Activated CD8-positive, alpha-beta T cell treated with anti-CD3 and anti-CD28 coated beads for 36 hours (primary cell): ENCODE measurements at regions of chr1 and their contacts with region 1.

Region 1: GRCh38 chr1:160085686-160086455 is 4.5 kb downstream of the KCNJ9 start:
- DNase-seq: peak; percentile 92
- ATAC-seq: peak; percentile 76
- H3K4me3 Mint-ChIP-seq: no peak overlapping the region
- H3K27ac Mint-ChIP-seq: no peak overlapping the region
- H3K4me1 Mint-ChIP-seq: peaks cover 5% of the 10 kb centered on the region
- H3K27me3 Mint-ChIP-seq: peaks cover 21% of the 10 kb centered on the region
- CTCF ChIP-seq: peak; percentile 91

Region 2: GRCh38 chr1:160031365-160032164 is 54.3 kb before region 1 on chr1 and contains the start of gene PIGM:
- CTCF ChIA-PET with region 1: interaction called, 693 read pairs
- POLR2A ChIA-PET with region 1: interaction called, 3 read pairs
- intact Hi-C with region 1: loop called (anchors 10 kb)
- DNase-seq: peak; percentile 98
- ATAC-seq: peak; percentile 99
- H3K4me3 Mint-ChIP-seq: peak within 1 kb of the TSS; percentile 88
- H3K27ac Mint-ChIP-seq: peak within 1 kb of the TSS; percentile 81
- H3K4me1 Mint-ChIP-seq: peaks cover 32% of the 10 kb centered on the region
- H3K27me3 Mint-ChIP-seq: no peaks in the 10 kb centered on the region
- CTCF ChIP-seq: no peak
- total RNA-seq, gene PIGM: 3.9 to 4.0 TPM

Region 3: DNA sequence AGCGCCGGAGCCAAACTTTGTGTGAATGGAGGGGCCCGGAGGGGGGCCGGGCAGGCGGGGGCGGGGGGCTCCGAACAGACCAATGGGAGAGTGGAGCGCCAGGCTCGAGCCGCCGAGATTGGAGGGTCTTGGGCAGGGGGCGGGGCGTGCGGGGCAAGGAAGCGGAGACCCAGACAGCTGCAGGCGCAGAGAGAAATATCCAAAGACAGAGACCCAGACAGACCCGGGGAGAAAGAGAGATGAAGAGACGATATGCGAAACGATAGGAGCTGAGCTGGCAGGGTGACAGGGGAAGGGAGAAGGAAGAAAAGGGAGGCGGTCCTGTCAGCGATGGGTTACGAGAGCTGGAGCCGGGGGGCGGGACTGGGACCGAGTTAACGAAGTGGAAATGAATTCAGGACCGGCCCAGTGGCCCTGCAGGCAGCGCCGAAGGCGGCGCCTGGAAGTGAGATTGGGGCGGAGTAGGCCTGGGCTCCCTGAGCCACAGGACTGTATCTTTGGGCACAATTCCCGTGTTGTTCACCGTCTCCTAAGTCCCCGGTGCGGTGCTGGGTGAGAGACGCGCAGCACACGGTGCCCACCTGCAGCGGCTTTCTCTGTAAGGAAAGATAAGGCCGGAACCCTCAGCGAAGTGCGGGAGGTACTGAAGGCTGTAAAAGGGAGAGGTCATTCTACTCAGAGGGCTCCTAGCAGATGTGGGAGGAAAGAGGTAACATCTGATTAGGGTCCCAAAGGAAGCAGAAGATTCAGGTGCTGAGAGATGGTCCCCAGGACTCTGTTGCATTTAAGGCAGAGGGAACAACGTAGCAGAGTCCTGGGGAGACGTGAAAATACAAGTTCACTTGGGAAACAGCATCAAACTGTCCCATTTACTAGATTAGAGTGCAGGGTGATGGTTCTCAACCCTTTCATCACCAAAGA is 15.4 kb before region 1 on chr1:
- CTCF ChIA-PET with region 1: interaction called, 82 read pairs
- POLR2A ChIA-PET with region 1: interaction called, 5 read pairs
- intact Hi-C with region 1: no loop called
- DNase-seq: peak; percentile 78
- ATAC-seq: peak; percentile 90
- H3K4me3 Mint-ChIP-seq: peak overlapping the region; percentile 80
- H3K27ac Mint-ChIP-seq: no peak overlapping the region
- H3K4me1 Mint-ChIP-seq: peaks cover 17% of the 10 kb centered on the region
- H3K27me3 Mint-ChIP-seq: peaks cover 26% of the 10 kb centered on the region
- CTCF ChIP-seq: no peak

Region 4: GRCh38 chr1:160205242-160206035 is 119.6 kb after region 1 on chr1 and contains the start of gene PEA15:
- CTCF ChIA-PET with region 1: interaction called, 10 read pairs
- POLR2A ChIA-PET with region 1: no interaction called
- intact Hi-C with region 1: no loop called
- DNase-seq: peak; percentile 70
- ATAC-seq: peak; percentile 76
- H3K4me3 Mint-ChIP-seq: peak within 1 kb of the TSS; percentile 82
- H3K27ac Mint-ChIP-seq: peak within 1 kb of the TSS; percentile 87
- H3K4me1 Mint-ChIP-seq: peaks cover 48% of the 10 kb centered on the region
- H3K27me3 Mint-ChIP-seq: no peaks in the 10 kb centered on the region
- CTCF ChIP-seq: no peak
- total RNA-seq, gene PEA15: 31.8 to 34.1 TPM